Activated T-helper 1 cell treated with anti-CD3 and anti-CD28 coated beads, Interleukin-12 subunit alpha, Interleukin-12 subunit beta, Interleukin-2, Interleukin-4 antibody, amounts not matched to agents 30 ng/mL and 10 ng/mL and 1 ng/mL, durations not matched to agents 14 hours and 24 hours and 36 hours (primary cell): ENCODE measurements at regions of chr3 and their contacts with region 1.

Region 1: GRCh38 chr3:120095226-120095978 is 1.2 kb upstream of the GSK3B start:
- DNase-seq: peak; percentile 91
- H3K4me3 Mint-ChIP-seq: no peak overlapping the region
- H3K27ac Mint-ChIP-seq: no peak overlapping the region
- H3K4me1 Mint-ChIP-seq: peaks cover 19% of the 10 kb centered on the region
- H3K27me3 Mint-ChIP-seq: no peaks in the 10 kb centered on the region

Region 2: GRCh38 chr3:119240591-119241434 is 854.6 kb before region 1 on chr3 and contains the start of gene B4GALT4:
- intact Hi-C with region 1: loop called (anchors 2 kb)
- DNase-seq: peak; percentile 75
- H3K4me3 Mint-ChIP-seq: peak within 1 kb of the TSS; percentile 87
- H3K27ac Mint-ChIP-seq: peak within 1 kb of the TSS; percentile 90
- H3K4me1 Mint-ChIP-seq: peaks cover 40% of the 10 kb centered on the region
- H3K27me3 Mint-ChIP-seq: no peaks in the 10 kb centered on the region
- total RNA-seq, gene B4GALT4: 14.1 and 18.6 TPM in 2 replicates

Region 3: GRCh38 chr3:119498186-119498987 is 597.0 kb before region 1 on chr3 and contains the start of gene TIMMDC1:
- intact Hi-C with region 1: loop called (anchors 10 kb)
- DNase-seq: peak; percentile 96
- H3K4me3 Mint-ChIP-seq: peak within 1 kb of the TSS; percentile 100
- H3K27ac Mint-ChIP-seq: peak within 1 kb of the TSS; percentile 99
- H3K4me1 Mint-ChIP-seq: peaks cover 33% of the 10 kb centered on the region
- H3K27me3 Mint-ChIP-seq: no peaks in the 10 kb centered on the region
- total RNA-seq, gene TIMMDC1: 124 and 126 TPM in 2 replicates

Region 4: GRCh38 chr3:119891944-119892721 is 203.3 kb before region 1 on chr3:
- intact Hi-C with region 1: loop called (anchors 1 kb)
- DNase-seq: peak; percentile 35
- H3K4me3 Mint-ChIP-seq: no peak overlapping the region
- H3K27ac Mint-ChIP-seq: no peak overlapping the region
- H3K4me1 Mint-ChIP-seq: peaks cover 10% of the 10 kb centered on the region
- H3K27me3 Mint-ChIP-seq: no peaks in the 10 kb centered on the region

Region 5: DNA sequence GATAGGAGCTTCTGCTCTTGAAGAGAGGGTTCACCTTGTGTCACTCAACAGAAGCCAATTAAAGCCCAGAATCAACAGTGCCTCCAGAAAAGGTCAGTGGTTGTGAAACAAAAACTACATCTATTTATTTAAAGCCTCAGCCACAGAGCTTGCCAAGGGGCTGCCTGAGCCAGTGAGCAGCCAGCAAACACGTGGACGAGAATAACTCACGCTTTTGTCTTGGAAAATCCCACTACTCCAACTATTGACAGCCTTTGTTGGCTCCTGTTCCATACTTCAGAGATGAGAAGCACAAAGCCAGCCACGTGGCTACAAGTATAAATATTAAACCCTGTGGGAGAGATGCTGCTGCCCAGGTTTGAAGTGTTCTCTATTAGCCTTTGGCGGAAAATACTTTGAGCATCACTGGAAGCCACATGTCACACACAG is 179.4 kb after region 1 on chr3:
- intact Hi-C with region 1: no loop called
- DNase-seq: no peak
- H3K4me3 Mint-ChIP-seq: no peak overlapping the region
- H3K27ac Mint-ChIP-seq: no peak overlapping the region
- H3K4me1 Mint-ChIP-seq: no peaks in the 10 kb centered on the region
- H3K27me3 Mint-ChIP-seq: peaks cover 15% of the 10 kb centered on the region

Region 6: GRCh38 chr3:120348981-120349818 is 253.8 kb after region 1 on chr3 and contains the start of gene LRRC58:
- intact Hi-C with region 1: loop called (anchors 1 kb)
- DNase-seq: peak; percentile 87
- H3K4me3 Mint-ChIP-seq: peak within 1 kb of the TSS; percentile 92
- H3K27ac Mint-ChIP-seq: peak within 1 kb of the TSS; percentile 88
- H3K4me1 Mint-ChIP-seq: peaks cover 46% of the 10 kb centered on the region
- H3K27me3 Mint-ChIP-seq: peaks cover 26% of the 10 kb centered on the region
- total RNA-seq, gene LRRC58: 26.9 and 27.4 TPM in 2 replicates

Region 7: DNA sequence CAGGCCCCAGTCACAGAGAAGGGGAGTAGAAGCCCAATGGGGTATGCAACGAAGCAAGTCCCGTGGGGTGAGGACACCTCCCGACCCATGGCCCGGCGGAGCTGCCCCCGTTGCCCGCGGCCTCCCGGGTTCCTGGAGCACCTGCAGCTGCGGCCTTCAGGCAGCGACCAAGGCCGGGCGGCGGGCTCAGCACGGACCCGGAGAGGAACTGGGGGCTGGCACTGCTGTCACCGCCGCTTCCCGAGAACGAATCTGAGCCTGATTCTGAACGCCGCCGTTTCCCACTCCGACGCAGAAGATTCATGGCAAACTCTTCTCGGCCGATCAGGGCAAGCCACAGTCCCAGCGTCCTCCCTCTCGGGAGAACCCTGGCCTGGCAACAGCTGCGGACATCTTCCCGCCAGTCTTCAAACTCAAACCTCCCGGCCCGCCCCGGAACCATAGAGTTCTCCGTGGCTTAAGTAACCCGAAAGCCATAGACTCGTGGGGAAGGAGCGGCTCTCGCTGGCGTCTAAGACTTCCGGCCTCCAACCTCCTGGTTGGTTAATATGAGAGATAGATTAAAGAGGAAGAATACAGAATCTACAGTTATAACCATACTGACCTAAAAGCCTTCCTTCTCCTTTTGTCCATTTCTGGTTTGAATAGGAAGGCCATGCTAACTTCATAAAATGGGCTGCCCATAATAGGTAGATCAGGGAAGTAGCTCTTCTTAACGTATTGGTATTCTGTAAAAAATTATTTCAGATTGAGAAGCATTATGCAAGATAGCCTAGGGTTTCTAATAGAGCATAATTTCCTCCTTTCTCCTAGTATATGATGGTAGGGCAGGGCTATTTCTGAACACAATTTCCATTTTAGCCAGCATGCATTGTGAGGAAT is 1450.4 kb after region 1 on chr3 and contains the start of gene POLQ:
- intact Hi-C with region 1: loop called (anchors 10 kb)
- DNase-seq: peak; percentile 83
- H3K4me3 Mint-ChIP-seq: peak within 1 kb of the TSS; percentile 89
- H3K27ac Mint-ChIP-seq: peak within 1 kb of the TSS; percentile 88
- H3K4me1 Mint-ChIP-seq: peaks cover 32% of the 10 kb centered on the region
- H3K27me3 Mint-ChIP-seq: peaks cover 2% of the 10 kb centered on the region
- total RNA-seq, gene POLQ: 29.0 and 30.1 TPM in 2 replicates